ENCODE measurements at regions of chr5 and their contacts with region 1.

Region 1: DNA sequence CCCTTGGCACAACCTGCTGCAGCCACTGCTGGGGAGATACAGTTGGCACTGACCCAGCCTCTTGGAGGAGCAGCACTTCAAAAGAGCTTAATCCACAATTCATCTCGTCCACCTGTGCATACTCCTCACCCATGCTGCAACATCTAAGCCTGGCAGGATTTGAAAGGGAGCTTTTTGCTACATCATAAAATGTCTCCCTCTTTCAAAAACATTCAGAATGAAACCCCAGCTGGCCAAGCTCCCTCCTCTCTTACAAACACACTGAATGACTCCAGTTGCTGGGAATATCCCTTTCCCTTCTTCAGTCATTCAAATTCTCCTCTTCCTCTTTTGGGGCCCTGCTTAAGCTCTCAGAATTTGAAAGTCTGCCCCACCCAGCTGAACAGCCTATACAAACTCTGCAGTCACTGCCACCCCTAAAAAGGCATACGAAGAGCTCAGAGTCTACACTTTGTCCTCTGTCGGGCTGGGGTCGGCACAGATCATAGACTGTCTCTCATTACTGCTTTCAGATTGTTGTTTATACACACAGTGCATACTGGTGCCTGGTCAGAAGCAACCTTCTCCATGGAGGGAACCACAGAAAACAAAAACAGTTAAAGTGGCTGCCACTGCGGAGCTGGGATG is 8.8 kb upstream of the C5orf15 start:
- DNase-seq: peak; percentile 34
- ATAC-seq: no peak
- H3K4me3 ChIP-seq: no peak overlapping the region
- H3K4me3 Mint-ChIP-seq: peak overlapping the region; percentile 8
- H3K27ac ChIP-seq: peak overlapping the region in 1 of 2 donors; percentile 59
- H3K27ac Mint-ChIP-seq: peak overlapping the region; percentile 52
- H3K4me1 ChIP-seq: peaks cover 17 to 27% of the 10 kb centered on the region in 2 donors
- H3K4me1 Mint-ChIP-seq: peaks cover 17% of the 10 kb centered on the region
- H3K27me3 ChIP-seq: no peaks in the 10 kb centered on the region
- H3K27me3 Mint-ChIP-seq: no peaks in the 10 kb centered on the region
- CTCF ChIP-seq: no peak

Region 2: GRCh38 chr5:133423618-133424282 is 553.5 kb before region 1 on chr5:
- CTCF ChIA-PET with region 1: interaction called, 31 read pairs
- POLR2A ChIA-PET with region 1: no interaction called
- intact Hi-C with region 1: no loop called
- DNase-seq: peak; percentile 80
- ATAC-seq: peak; percentile 79
- H3K4me3 ChIP-seq: no peak overlapping the region
- H3K4me3 Mint-ChIP-seq: no peak overlapping the region
- H3K27ac ChIP-seq: no peak overlapping the region
- H3K27ac Mint-ChIP-seq: no peak overlapping the region
- H3K4me1 ChIP-seq: peaks cover 0 to 13% of the 10 kb centered on the region in 2 donors
- H3K4me1 Mint-ChIP-seq: peaks cover 7% of the 10 kb centered on the region
- H3K27me3 ChIP-seq: no peaks in the 10 kb centered on the region
- H3K27me3 Mint-ChIP-seq: peaks cover 28% of the 10 kb centered on the region
- CTCF ChIP-seq: peak; percentile 98

Region 3: GRCh38 chr5:133779828-133780475 is 197.3 kb before region 1 on chr5:
- CTCF ChIA-PET with region 1: no interaction called
- POLR2A ChIA-PET with region 1: no interaction called
- intact Hi-C with region 1: loop called (anchors 10 kb)
- DNase-seq: no peak
- ATAC-seq: no peak
- H3K4me3 ChIP-seq: no peak overlapping the region
- H3K4me3 Mint-ChIP-seq: no peak overlapping the region
- H3K27ac ChIP-seq: no peak overlapping the region
- H3K27ac Mint-ChIP-seq: no peak overlapping the region
- H3K4me1 ChIP-seq: no peaks in the 10 kb centered on the region
- H3K4me1 Mint-ChIP-seq: no peaks in the 10 kb centered on the region
- H3K27me3 ChIP-seq: no peaks in the 10 kb centered on the region
- H3K27me3 Mint-ChIP-seq: peaks cover 5% of the 10 kb centered on the region
- CTCF ChIP-seq: no peak

Region 4: GRCh38 chr5:133907075-133907474 is 70.2 kb before region 1 on chr5:
- CTCF ChIA-PET with region 1: interaction called, 38 read pairs
- POLR2A ChIA-PET with region 1: no interaction called
- intact Hi-C with region 1: loop called (anchors 1 kb)
- DNase-seq: no peak
- ATAC-seq: no peak
- H3K4me3 ChIP-seq: no peak overlapping the region
- H3K4me3 Mint-ChIP-seq: no peak overlapping the region
- H3K27ac ChIP-seq: peak overlapping the region in 1 of 2 donors; percentile 56
- H3K27ac Mint-ChIP-seq: peak overlapping the region; percentile 50
- H3K4me1 ChIP-seq: peaks cover 0 to 12% of the 10 kb centered on the region in 2 donors
- H3K4me1 Mint-ChIP-seq: peaks cover 20% of the 10 kb centered on the region
- H3K27me3 ChIP-seq: no peaks in the 10 kb centered on the region
- H3K27me3 Mint-ChIP-seq: no peaks in the 10 kb centered on the region
- CTCF ChIP-seq: no peak

Region 5: DNA sequence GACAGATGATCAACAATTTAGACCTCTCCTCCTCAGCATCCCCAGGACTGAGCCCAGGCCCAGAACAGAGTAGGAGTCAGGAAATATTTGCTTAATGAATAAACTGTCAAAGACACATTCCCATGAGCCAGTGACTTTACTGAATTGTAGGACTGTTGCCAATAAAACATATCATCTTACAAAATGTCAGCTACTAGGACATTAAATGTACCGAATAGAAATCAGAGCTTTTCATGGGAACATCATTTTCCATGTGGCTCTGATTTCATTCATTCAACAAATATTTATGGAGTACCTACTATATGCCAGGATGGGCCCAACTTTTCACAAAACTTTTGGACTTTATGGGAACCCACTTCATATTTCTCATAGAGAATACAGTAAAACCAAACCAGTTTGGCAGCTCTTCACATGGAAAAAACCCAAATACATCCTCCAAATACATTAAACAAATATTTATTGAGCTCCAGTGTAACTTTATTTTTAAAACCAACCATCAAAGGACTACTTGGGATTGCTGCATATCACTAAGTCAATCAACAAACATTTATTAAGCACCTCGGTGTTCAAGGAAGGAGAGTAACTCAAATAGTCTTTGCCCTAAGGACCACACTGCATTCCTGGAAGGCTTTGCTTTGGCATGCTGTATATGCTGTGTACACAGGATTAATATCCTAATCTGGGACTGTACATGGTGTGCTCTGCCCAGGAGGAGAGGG is 16.1 kb after region 1 on chr5:
- CTCF ChIA-PET with region 1: interaction called, 15 read pairs
- POLR2A ChIA-PET with region 1: no interaction called
- intact Hi-C with region 1: no loop called
- DNase-seq: no peak
- ATAC-seq: no peak
- H3K4me3 ChIP-seq: no peak overlapping the region
- H3K4me3 Mint-ChIP-seq: no peak overlapping the region
- H3K27ac ChIP-seq: no peak overlapping the region
- H3K27ac Mint-ChIP-seq: peak overlapping the region; percentile 11
- H3K4me1 ChIP-seq: peaks cover 16 to 22% of the 10 kb centered on the region in 2 donors
- H3K4me1 Mint-ChIP-seq: peaks cover 55% of the 10 kb centered on the region
- H3K27me3 ChIP-seq: no peaks in the 10 kb centered on the region
- H3K27me3 Mint-ChIP-seq: no peaks in the 10 kb centered on the region
- CTCF ChIP-seq: no peak

Region 6: GRCh38 chr5:134053840-134054338 is 76.6 kb after region 1 on chr5:
- CTCF ChIA-PET with region 1: no interaction called
- POLR2A ChIA-PET with region 1: no interaction called
- intact Hi-C with region 1: no loop called
- DNase-seq: no peak
- ATAC-seq: no peak
- H3K4me3 ChIP-seq: no peak overlapping the region
- H3K4me3 Mint-ChIP-seq: no peak overlapping the region
- H3K27ac ChIP-seq: no peak overlapping the region
- H3K27ac Mint-ChIP-seq: no peak overlapping the region
- H3K4me1 ChIP-seq: peaks cover 0 to 6% of the 10 kb centered on the region in 2 donors
- H3K4me1 Mint-ChIP-seq: peaks cover 7% of the 10 kb centered on the region
- H3K27me3 ChIP-seq: no peaks in the 10 kb centered on the region
- H3K27me3 Mint-ChIP-seq: no peaks in the 10 kb centered on the region
- CTCF ChIP-seq: no peak